ENCODE measurements at regions of chr15 and their contacts with region 1.

Region 1: DNA sequence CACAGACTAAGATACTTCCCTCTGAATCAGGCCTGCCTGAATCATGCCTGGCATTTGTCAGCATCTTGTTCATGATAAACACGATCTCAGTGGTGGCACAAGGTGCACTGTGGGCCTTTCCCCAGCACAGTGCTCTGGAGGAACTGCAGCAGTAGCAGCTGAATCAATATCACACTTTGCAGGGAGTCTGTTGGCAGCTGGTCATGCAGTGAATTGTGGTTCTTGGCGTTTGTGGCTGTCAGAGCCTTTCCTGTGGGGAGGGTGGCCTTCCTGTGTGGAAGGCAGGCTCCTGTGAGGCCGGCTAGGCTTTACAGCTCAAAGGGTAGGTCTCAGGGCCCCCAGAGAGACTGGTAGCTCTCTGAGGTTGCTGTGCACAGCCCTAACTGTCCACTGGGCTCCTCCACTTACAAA is 54.4 kb upstream of the TLE3 start:
- DNase-seq: peak; percentile 92
- H3K4me3 ChIP-seq: no peak overlapping the region
- H3K27ac ChIP-seq: no peak overlapping the region
- H3K4me1 ChIP-seq: peaks cover 7% of the 10 kb centered on the region
- H3K27me3 ChIP-seq: peaks cover 0 to 4% of the 10 kb centered on the region in 2 experiments
- CTCF ChIP-seq: no peak
- POLR2A ChIP-seq: no peak

Region 2: GRCh38 chr15:69462493-69463181 is 689.4 kb before region 1 on chr15:
- CTCF ChIA-PET with region 1: no interaction called
- POLR2A ChIA-PET with region 1: no interaction called
- dilution Hi-C with region 1: no loop called
- intact Hi-C with region 1: no loop called
- DNase-seq: peak; percentile 99
- H3K4me3 ChIP-seq: peak overlapping the region; percentile 1 to 38 (median 31)
- H3K27ac ChIP-seq: peak overlapping the region; percentile 65
- H3K4me1 ChIP-seq: peaks cover 8% of the 10 kb centered on the region
- H3K27me3 ChIP-seq: no peaks in the 10 kb centered on the region
- CTCF ChIP-seq: peak; percentile 94 to 97
- POLR2A ChIP-seq: peak; percentile 80

Region 3: GRCh38 chr15:70111203-70112073 is 40.6 kb before region 1 on chr15:
- CTCF ChIA-PET with region 1: interaction called, 3 read pairs
- POLR2A ChIA-PET with region 1: no interaction called
- dilution Hi-C with region 1: no loop called
- intact Hi-C with region 1: loop called (anchors 1 kb)
- DNase-seq: peak; percentile 91
- H3K4me3 ChIP-seq: no peak overlapping the region
- H3K27ac ChIP-seq: no peak overlapping the region
- H3K4me1 ChIP-seq: peaks cover 13% of the 10 kb centered on the region
- H3K27me3 ChIP-seq: peaks cover 4 to 7% of the 10 kb centered on the region in 2 experiments
- CTCF ChIP-seq: no peak
- POLR2A ChIP-seq: no peak

Region 4: DNA sequence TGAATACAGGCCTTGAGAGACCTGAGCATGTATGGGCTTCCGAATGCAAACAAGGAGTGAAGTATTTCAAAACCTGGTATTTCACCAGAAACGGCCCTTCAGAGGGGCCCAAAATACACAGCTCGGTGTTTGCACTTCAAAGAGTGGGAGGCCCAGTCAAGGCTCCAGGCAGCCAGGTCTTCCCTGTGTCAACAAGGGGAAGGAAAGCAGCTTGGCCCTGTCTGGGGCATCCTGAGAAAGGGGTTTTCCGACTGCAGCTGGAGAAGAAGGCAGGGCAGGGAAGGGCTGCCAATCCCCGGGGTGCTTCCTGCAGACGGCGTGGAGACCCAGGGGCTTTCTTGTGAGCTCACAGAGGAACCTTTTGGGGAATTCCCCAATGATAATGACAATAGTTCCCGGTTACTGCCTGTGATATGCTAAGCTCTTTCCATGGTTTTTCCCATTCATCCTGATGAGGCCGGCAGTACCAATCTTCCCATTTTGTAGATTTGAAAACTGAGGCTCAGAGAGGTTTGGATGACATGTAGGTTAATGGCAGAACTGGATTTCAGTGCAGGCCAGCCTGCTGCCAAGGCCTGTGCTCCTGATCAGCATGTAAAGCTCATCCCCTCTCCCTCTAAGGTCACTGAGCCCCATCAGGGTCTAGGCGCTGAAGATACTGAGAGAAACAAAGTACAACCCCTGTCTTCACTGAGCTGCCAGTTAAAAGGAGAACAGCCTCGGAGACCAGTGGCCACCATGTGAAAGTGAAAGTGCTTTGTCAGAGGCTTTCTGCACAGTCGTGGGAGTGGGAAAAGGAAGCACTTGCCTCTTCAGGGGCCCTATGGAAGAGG is 11.3 kb before region 1 on chr15:
- CTCF ChIA-PET with region 1: interaction called, 30 read pairs
- POLR2A ChIA-PET with region 1: no interaction called
- dilution Hi-C with region 1: no loop called
- intact Hi-C with region 1: no loop called
- DNase-seq: peak; percentile 80
- H3K4me3 ChIP-seq: no peak overlapping the region
- H3K27ac ChIP-seq: no peak overlapping the region
- H3K4me1 ChIP-seq: peaks cover 16% of the 10 kb centered on the region
- H3K27me3 ChIP-seq: peaks cover 4 to 11% of the 10 kb centered on the region in 2 experiments
- CTCF ChIP-seq: no peak
- POLR2A ChIP-seq: no peak